Mammary epithelial cell (primary cell): ENCODE measurements at regions of chr19 and their contacts with region 1.

Region 1: GRCh38 chr19:43446746-43447489 is 18.5 kb downstream of the LYPD3 start:
- DNase-seq: peak; percentile 62
- H3K4me3 ChIP-seq: no peak overlapping the region
- H3K27ac ChIP-seq: no peak overlapping the region
- H3K4me1 ChIP-seq: peaks cover 4% of the 10 kb centered on the region
- H3K27me3 ChIP-seq: no peaks in the 10 kb centered on the region
- CTCF ChIP-seq: peak; percentile 93 to 97

Region 2: GRCh38 chr19:42244347-42245220 is 1202.3 kb before region 1 on chr19:
- CTCF ChIA-PET with region 1: no interaction called
- dilution Hi-C with region 1: no loop called
- in situ Hi-C with region 1: no loop called
- intact Hi-C with region 1: no loop called
- DNase-seq: peak; percentile 90
- H3K4me3 ChIP-seq: peak overlapping the region; percentile 60 to 77 (median 72)
- H3K27ac ChIP-seq: peak overlapping the region; percentile 26
- H3K4me1 ChIP-seq: peaks cover 23% of the 10 kb centered on the region
- H3K27me3 ChIP-seq: no peaks in the 10 kb centered on the region
- CTCF ChIP-seq: peak; percentile 45 to 68

Region 3: GRCh38 chr19:43372462-43372861 is 74.5 kb before region 1 on chr19:
- CTCF ChIA-PET with region 1: no interaction called
- dilution Hi-C with region 1: no loop called
- in situ Hi-C with region 1: no loop called
- intact Hi-C with region 1: no loop called
- DNase-seq: peak; percentile 18
- H3K4me3 ChIP-seq: no peak overlapping the region
- H3K27ac ChIP-seq: no peak overlapping the region
- H3K4me1 ChIP-seq: no peaks in the 10 kb centered on the region
- H3K27me3 ChIP-seq: peaks cover 2% of the 10 kb centered on the region
- CTCF ChIP-seq: no peak

Region 4: GRCh38 chr19:43503501-43504425 is 56.8 kb after region 1 on chr19:
- CTCF ChIA-PET with region 1: no interaction called
- dilution Hi-C with region 1: no loop called
- in situ Hi-C with region 1: no loop called
- intact Hi-C with region 1: loop called (anchors 1 kb)
- DNase-seq: peak; percentile 85
- H3K4me3 ChIP-seq: peak overlapping the region; percentile 82 to 90 (median 88)
- H3K27ac ChIP-seq: peak overlapping the region; percentile 86
- H3K4me1 ChIP-seq: peaks cover 14% of the 10 kb centered on the region
- H3K27me3 ChIP-seq: no peaks in the 10 kb centered on the region
- CTCF ChIP-seq: no peak

Region 5: GRCh38 chr19:43519436-43520088 is 72.6 kb after region 1 on chr19:
- CTCF ChIA-PET with region 1: interaction called, 29 read pairs
- dilution Hi-C with region 1: no loop called
- in situ Hi-C with region 1: loop called (anchors 5 kb)
- intact Hi-C with region 1: loop called (anchors 1 kb)
- DNase-seq: peak; percentile 93
- H3K4me3 ChIP-seq: no peak overlapping the region
- H3K27ac ChIP-seq: peak overlapping the region; percentile 71
- H3K4me1 ChIP-seq: peaks cover 16% of the 10 kb centered on the region
- H3K27me3 ChIP-seq: no peaks in the 10 kb centered on the region
- CTCF ChIP-seq: peak; percentile 87 to 88

Region 6: GRCh38 chr19:43526884-43527859 is 80.3 kb after region 1 on chr19 and contains the start of gene ETHE1:
- CTCF ChIA-PET with region 1: no interaction called
- dilution Hi-C with region 1: loop called (anchors 5 kb)
- in situ Hi-C with region 1: loop called (anchors 5 kb)
- intact Hi-C with region 1: no loop called
- DNase-seq: peak; percentile 78
- H3K4me3 ChIP-seq: peak within 1 kb of the TSS; percentile 75 to 90 (median 90)
- H3K27ac ChIP-seq: peak within 1 kb of the TSS; percentile 71
- H3K4me1 ChIP-seq: peaks cover 37% of the 10 kb centered on the region
- H3K27me3 ChIP-seq: no peaks in the 10 kb centered on the region
- CTCF ChIP-seq: no peak
- total RNA-seq, gene ETHE1: 114 to 122 TPM

Region 7: DNA sequence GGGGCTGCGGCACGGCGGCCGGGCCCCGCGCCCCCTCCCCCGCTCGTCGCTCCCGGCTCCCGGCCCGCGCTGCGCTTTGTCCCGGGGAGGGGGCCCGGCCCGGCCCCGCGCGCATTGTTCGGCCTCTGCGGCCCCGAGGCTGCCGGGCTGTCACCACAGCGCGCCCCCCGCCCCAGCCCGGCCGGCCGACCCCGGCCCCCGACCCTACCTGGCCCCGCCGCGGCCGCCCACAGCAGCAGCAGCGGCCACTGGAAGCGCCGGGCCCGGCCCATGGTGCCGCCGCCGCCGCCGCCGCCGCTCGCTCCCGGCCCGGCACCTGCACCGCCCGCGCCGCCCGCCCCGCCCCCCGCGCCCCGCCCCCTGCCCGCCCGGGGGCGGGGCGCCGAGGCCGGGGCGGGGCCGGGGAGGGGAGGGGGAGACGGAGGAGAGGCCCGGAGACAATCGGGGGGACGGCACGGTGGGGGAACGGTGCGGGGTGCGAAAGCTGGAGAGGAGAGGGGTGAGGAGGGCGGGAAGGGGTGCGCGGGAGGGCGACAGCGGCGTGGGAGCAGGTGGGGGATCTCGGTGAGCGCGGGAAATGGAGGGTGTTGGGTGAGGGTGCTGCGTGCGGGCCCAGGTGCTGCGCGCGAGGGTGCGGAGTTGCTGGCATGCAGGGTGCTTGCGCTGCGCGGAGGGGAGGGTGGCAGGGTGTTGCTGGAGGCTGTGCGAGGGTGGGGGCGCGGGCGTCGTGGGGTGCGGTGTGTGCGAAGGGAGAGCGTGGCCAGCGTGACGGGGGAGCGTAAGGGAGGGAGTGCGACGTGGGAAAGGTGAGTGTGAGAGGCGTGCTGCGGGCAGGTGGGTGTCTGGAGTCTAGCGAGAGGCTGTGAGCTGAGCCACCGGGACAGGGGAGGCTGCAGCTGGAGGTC is 192.9 kb after region 1 on chr19 and contains the start of gene CADM4:
- CTCF ChIA-PET with region 1: no interaction called
- dilution Hi-C with region 1: loop called (anchors 5 kb)
- in situ Hi-C with region 1: no loop called
- intact Hi-C with region 1: no loop called
- DNase-seq: no peak
- H3K4me3 ChIP-seq: peak within 1 kb of the TSS; percentile 44 to 72 (median 54)
- H3K27ac ChIP-seq: no peak within 1 kb of the TSS
- H3K4me1 ChIP-seq: peaks cover 24% of the 10 kb centered on the region
- H3K27me3 ChIP-seq: no peaks in the 10 kb centered on the region
- CTCF ChIP-seq: no peak
- total RNA-seq, gene CADM4: 11.7 to 12.8 TPM

Region 8: GRCh38 chr19:43651758-43652545 is 205.0 kb after region 1 on chr19:
- CTCF ChIA-PET with region 1: no interaction called
- dilution Hi-C with region 1: no loop called
- in situ Hi-C with region 1: loop called in 1 of 2 experiments (anchors 10 kb)
- intact Hi-C with region 1: loop called (anchors 1 kb)
- DNase-seq: no peak
- H3K4me3 ChIP-seq: no peak overlapping the region
- H3K27ac ChIP-seq: no peak overlapping the region
- H3K4me1 ChIP-seq: no peaks in the 10 kb centered on the region
- H3K27me3 ChIP-seq: no peaks in the 10 kb centered on the region
- CTCF ChIP-seq: peak; percentile 71 to 90